ENCODE measurements at regions of chr5 and their contacts with region 1.

Region 1: DNA sequence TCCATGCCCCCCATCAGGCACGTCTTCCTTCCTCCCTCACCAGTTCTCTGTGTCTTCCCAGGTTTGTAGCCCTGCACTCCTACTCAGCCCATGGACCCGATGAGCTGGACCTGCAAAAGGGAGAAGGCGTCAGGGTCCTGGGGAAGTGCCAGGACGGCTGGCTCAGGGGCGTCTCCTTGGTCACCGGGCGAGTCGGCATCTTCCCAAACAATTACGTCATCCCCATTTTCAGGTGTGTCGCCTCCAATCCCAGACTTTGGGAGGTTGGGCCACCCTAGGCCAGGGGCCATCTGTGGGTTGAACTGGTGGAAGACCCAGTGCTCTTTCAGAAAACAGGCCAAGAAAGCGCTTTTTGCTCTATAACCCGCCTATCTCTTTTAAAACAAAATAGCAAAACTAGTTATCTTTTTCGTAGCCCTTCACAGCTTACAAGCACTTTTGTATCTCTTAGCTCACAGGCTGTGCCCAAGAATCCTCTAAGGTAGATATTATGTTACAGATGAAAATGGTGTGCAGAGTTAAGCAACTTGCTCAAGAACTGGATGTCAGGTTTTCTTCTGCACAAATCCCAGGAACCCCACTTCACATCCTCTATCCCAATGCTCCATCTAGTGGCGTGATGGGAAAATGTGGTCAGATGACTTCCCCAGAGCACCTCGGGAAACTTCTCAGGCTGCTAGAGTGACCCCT is 56.2 kb downstream of the PLAC8L1 start:
- DNase-seq: peak; percentile 48
- ATAC-seq: peak; percentile 78
- H3K4me3 ChIP-seq: no peak overlapping the region
- H3K27ac ChIP-seq: no peak overlapping the region
- H3K4me1 ChIP-seq: peaks cover 18 to 22% of the 10 kb centered on the region in 2 experiments
- H3K27me3 ChIP-seq: no peaks in the 10 kb centered on the region
- CTCF ChIP-seq: peak; percentile 76 to 78 (median 77)
- POLR2A ChIP-seq: no peak
- RAD21 ChIP-seq: peak; percentile 96

Region 2: DNA sequence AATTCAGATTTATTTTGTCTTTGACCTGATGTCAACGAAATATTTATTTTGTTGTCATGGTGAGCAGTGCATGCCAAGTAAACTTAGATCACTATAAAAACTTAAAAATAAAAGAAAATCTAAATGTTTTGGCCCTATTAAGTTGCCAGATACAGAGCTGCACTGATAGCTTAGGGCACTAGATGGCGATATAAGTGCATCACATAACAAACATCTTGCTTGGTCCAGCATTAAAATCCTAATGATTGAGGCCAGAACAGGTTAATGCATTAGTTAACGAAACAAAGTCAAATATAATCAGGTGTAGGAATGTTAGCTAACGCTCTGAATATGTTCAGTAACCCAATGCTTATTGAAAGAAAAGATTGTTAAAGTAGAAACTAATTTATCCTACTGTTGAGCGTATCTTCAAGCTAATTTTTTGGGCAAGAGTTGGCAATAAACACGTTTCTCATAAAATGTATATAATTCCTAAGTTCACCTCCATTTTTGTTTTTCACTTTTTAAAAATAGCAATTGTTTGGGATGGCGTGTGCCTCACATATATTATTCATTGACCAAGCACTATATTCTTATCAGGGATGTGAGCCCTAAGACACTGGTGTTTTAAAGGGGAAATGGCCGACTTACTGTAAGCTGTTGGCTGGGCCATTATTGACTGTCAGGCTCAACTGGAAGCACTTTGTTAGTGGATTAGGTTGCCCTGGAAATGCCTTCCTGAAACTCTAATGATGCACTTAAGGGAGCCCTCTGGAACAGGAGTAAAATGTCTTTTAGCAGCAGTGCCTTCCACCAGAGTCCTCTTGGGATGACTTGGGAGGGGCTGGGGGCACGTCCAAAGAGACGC is 1845.2 kb before region 1 on chr5:
- CTCF ChIA-PET with region 1: no interaction called
- POLR2A ChIA-PET with region 1: no interaction called
- RAD21 ChIA-PET with region 1: no interaction called
- intact Hi-C with region 1: loop called (anchors 5 kb)
- DNase-seq: peak; percentile 57
- ATAC-seq: peak; percentile 94
- H3K4me3 ChIP-seq: no peak overlapping the region
- H3K27ac ChIP-seq: no peak overlapping the region
- H3K4me1 ChIP-seq: no peaks in the 10 kb centered on the region
- H3K27me3 ChIP-seq: peaks cover 64% of the 10 kb centered on the region
- CTCF ChIP-seq: peak; percentile 57 to 87 (median 70); a peak in 5 of 6 replicates
- POLR2A ChIP-seq: no peak
- RAD21 ChIP-seq: peak; percentile 87

Region 3: DNA sequence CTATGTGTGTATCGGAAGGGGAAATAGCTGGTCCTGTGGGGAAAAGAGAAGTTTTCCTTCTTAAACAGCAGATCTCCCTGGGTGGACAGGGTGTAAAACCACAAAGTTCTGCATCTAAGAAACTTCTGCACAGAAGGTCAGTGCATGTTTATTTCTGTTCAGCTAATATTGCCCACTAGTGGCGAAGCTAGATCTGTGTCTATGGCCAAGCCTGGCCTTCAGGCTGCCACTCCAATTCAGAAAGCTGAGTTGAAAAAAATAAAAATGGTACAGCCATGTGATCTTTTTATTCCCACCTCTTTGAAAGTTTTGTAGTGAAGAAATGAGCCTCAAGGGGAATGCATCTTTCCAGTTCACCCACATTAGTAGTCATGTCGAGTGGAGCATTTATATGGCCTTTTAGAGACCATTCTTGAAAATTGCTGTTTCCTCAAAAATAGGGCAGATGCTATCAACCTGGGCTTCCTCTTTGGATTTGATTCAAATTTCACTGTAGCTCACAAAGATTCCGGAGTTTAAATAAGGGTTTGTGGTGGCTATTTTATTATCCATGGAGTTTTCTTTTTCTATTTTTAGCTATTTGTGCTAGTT is 702.0 kb before region 1 on chr5:
- CTCF ChIA-PET with region 1: no interaction called
- POLR2A ChIA-PET with region 1: no interaction called
- RAD21 ChIA-PET with region 1: no interaction called
- intact Hi-C with region 1: loop called (anchors 10 kb)
- DNase-seq: peak; percentile 23
- ATAC-seq: peak; percentile 97
- H3K4me3 ChIP-seq: no peak overlapping the region
- H3K27ac ChIP-seq: no peak overlapping the region
- H3K4me1 ChIP-seq: peaks cover 0 to under 1% of the 10 kb centered on the region in 2 experiments; a peak in 1 of 4 replicates
- H3K27me3 ChIP-seq: no peaks in the 10 kb centered on the region
- CTCF ChIP-seq: peak; percentile 37 to 73 (median 63); a peak in 5 of 6 replicates
- POLR2A ChIP-seq: no peak
- RAD21 ChIP-seq: peak; percentile 60

Region 4: GRCh38 chr5:145697251-145697990 is 351.7 kb before region 1 on chr5:
- CTCF ChIA-PET with region 1: interaction called, 4 read pairs
- POLR2A ChIA-PET with region 1: no interaction called
- RAD21 ChIA-PET with region 1: no interaction called
- intact Hi-C with region 1: loop called (anchors 1 kb)
- DNase-seq: peak; percentile 40
- ATAC-seq: peak; percentile 89
- H3K4me3 ChIP-seq: no peak overlapping the region
- H3K27ac ChIP-seq: no peak overlapping the region
- H3K4me1 ChIP-seq: peaks cover 0 to 6% of the 10 kb centered on the region in 2 experiments; a peak in 2 of 4 replicates
- H3K27me3 ChIP-seq: no peaks in the 10 kb centered on the region
- CTCF ChIP-seq: peak; percentile 66 to 79 (median 74); a peak in 5 of 6 replicates
- POLR2A ChIP-seq: no peak
- RAD21 ChIP-seq: peak; percentile 75

Region 5: DNA sequence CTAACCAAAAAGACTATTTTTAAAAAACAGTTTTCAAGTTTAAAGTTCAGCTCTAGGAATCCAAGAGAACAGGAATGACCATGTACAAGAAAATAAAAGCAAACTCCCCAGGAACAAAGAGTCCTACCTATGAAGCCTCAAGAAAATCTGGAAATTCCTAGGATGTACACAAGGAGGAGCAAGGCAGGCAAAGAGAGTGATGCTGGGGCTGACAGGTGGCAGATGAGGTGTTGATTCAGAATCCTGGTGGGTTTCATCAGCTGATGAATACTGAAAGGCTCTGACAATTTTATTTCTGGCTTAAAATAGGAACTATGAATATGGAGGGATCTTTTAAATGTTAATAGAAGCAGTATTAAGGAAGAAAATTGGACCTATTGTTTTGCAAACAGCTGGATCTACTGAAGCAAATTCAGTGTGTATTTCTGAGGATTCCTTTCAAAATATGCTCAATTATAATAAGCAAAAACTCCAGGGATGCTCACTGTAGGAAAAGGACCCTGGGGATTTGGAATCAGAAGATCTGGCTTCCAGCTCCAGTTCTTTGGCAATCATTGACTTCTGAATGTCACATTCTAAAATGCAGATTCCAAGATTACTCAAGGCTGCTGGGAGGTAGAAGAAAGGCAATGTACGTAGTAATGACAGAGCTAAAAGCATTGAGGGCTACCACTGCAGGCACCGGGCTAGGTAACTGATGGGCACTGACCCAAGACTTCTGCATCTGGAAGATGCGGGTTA is 140.8 kb before region 1 on chr5:
- CTCF ChIA-PET with region 1: no interaction called
- POLR2A ChIA-PET with region 1: no interaction called
- RAD21 ChIA-PET with region 1: no interaction called
- intact Hi-C with region 1: loop called (anchors 1 kb)
- DNase-seq: peak; percentile 18
- ATAC-seq: peak; percentile 76
- H3K4me3 ChIP-seq: no peak overlapping the region
- H3K27ac ChIP-seq: no peak overlapping the region
- H3K4me1 ChIP-seq: no peaks in the 10 kb centered on the region
- H3K27me3 ChIP-seq: no peaks in the 10 kb centered on the region
- CTCF ChIP-seq: peak; percentile 38 to 65 (median 50); a peak in 4 of 6 replicates
- POLR2A ChIP-seq: no peak
- RAD21 ChIP-seq: peak; percentile 68